IMR-90 (cell line): ENCODE measurements at regions of chr12 and their contacts with region 1.

Region 1: GRCh38 chr12:12837025-12837872 is 24.1 kb downstream of the DDX47 start:
- DNase-seq: peak; percentile 84
- ATAC-seq: peak; percentile 85
- H3K4me3 ChIP-seq: no peak overlapping the region
- H3K27ac ChIP-seq: peak overlapping the region; percentile 47
- H3K4me1 ChIP-seq: peaks cover 20% of the 10 kb centered on the region
- H3K27me3 ChIP-seq: no peaks in the 10 kb centered on the region
- CTCF ChIP-seq: peak; percentile 73
- POLR2A ChIP-seq: no peak
- RAD21 ChIP-seq: peak; percentile 79

Region 2: GRCh38 chr12:12881151-12881894 is 44.1 kb after region 1 on chr12:
- CTCF ChIA-PET with region 1: no interaction called
- POLR2A ChIA-PET with region 1: no interaction called
- dilution Hi-C with region 1: no loop called
- in situ Hi-C with region 1: loop called (anchors 10 kb)
- intact Hi-C with region 1: no loop called
- DNase-seq: peak; percentile 79
- ATAC-seq: peak; percentile 57
- H3K4me3 ChIP-seq: no peak overlapping the region
- H3K27ac ChIP-seq: peak overlapping the region; percentile 40
- H3K4me1 ChIP-seq: peaks cover 16% of the 10 kb centered on the region
- H3K27me3 ChIP-seq: no peaks in the 10 kb centered on the region
- CTCF ChIP-seq: no peak
- POLR2A ChIP-seq: no peak
- RAD21 ChIP-seq: no peak

Region 3: GRCh38 chr12:12890815-12891645 is 53.8 kb after region 1 on chr12 and contains the start of gene GPRC5A:
- CTCF ChIA-PET with region 1: interaction called, 7 read pairs
- POLR2A ChIA-PET with region 1: no interaction called
- dilution Hi-C with region 1: no loop called
- in situ Hi-C with region 1: loop called (anchors 10 kb)
- intact Hi-C with region 1: loop called (anchors 2 kb)
- DNase-seq: peak; percentile 98
- ATAC-seq: peak; percentile 90
- H3K4me3 ChIP-seq: peak within 1 kb of the TSS; percentile 72
- H3K27ac ChIP-seq: peak within 1 kb of the TSS; percentile 78
- H3K4me1 ChIP-seq: peaks cover 9% of the 10 kb centered on the region
- H3K27me3 ChIP-seq: no peaks in the 10 kb centered on the region
- CTCF ChIP-seq: peak; percentile 47
- POLR2A ChIP-seq: peak; percentile 98
- RAD21 ChIP-seq: peak; percentile 58
- total RNA-seq, gene GPRC5A: 49.6 and 49.7 TPM in 2 replicates

Region 4: GRCh38 chr12:12983420-12984035 is 146.3 kb after region 1 on chr12:
- CTCF ChIA-PET with region 1: interaction called, 6 read pairs
- POLR2A ChIA-PET with region 1: no interaction called
- dilution Hi-C with region 1: no loop called
- in situ Hi-C with region 1: loop called (anchors 10 kb)
- intact Hi-C with region 1: loop called (anchors 1 kb)
- DNase-seq: peak; percentile 69
- ATAC-seq: peak; percentile 46
- H3K4me3 ChIP-seq: no peak overlapping the region
- H3K27ac ChIP-seq: no peak overlapping the region
- H3K4me1 ChIP-seq: peaks cover 20% of the 10 kb centered on the region
- H3K27me3 ChIP-seq: no peaks in the 10 kb centered on the region
- CTCF ChIP-seq: peak; percentile 79
- POLR2A ChIP-seq: no peak
- RAD21 ChIP-seq: peak; percentile 88

Region 5: DNA sequence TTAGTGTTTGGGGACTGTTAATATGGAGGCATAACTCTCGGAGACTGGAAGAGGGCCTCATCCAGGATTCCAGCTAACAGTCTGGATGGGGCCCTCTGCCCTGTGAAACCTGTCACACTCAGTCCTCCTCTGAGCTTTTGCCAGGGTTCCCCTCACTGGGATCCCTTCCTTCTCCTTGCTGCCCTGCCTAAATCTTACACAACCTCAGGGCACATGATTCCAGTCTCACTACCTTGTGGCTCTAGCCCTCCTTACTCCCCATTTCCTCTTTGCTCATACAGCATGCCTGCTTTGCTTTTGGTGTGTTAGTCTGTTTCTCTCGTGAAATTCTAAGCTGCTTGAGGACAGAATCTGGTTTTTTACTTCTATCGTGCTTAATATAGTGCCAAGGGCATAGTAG is 267.2 kb after region 1 on chr12:
- CTCF ChIA-PET with region 1: no interaction called
- POLR2A ChIA-PET with region 1: no interaction called
- dilution Hi-C with region 1: no loop called
- in situ Hi-C with region 1: no loop called
- intact Hi-C with region 1: no loop called
- DNase-seq: no peak
- ATAC-seq: no peak
- H3K4me3 ChIP-seq: no peak overlapping the region
- H3K27ac ChIP-seq: no peak overlapping the region
- H3K4me1 ChIP-seq: peaks cover 26% of the 10 kb centered on the region
- H3K27me3 ChIP-seq: no peaks in the 10 kb centered on the region
- CTCF ChIP-seq: no peak
- POLR2A ChIP-seq: no peak
- RAD21 ChIP-seq: no peak